HEK293 (cell line): ENCODE measurements at regions of chr9 and their contacts with region 1.

Region 1: DNA sequence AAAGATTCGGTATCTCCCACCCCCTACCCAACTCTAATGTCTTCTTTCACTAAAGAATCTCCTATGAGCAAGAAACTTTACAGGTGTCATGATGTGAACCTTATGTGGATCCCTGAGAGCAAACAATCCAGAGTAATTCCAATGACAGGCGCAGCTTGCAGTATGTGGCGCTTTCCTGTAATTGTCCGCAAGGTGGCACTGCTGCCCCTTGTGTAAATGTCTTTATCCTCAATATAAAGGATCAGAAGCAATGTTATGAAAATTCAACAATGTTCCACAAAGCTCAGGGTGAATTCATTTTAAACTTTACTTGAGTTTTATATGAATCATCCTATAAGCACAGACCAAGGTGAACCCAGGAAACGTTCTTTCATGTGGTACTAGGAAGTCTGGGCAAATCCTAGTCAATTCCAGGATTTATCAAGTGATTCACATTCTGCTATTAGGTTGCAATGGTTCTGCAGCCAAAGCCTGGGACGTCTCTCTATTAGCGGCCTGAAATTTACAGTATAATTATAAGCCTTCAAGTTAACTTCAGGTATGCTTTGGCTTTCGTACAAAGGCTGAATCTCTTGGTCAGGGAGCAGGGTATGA is 113.7 kb downstream of the TRPM6 start:
- H3K4me3 ChIP-seq: no peak overlapping the region
- H3K27ac ChIP-seq: no peak overlapping the region
- H3K4me1 ChIP-seq: no peaks in the 10 kb centered on the region
- CTCF ChIP-seq: no peak

Region 2: GRCh38 chr9:74795803-74796202 is 21.8 kb after region 1 on chr9:
- CTCF ChIA-PET with region 1: interaction called, 10 read pairs
- POLR2A ChIA-PET with region 1: no interaction called
- H3K4me3 ChIP-seq: no peak overlapping the region
- H3K27ac ChIP-seq: no peak overlapping the region
- H3K4me1 ChIP-seq: no peaks in the 10 kb centered on the region
- CTCF ChIP-seq: no peak

Region 3: GRCh38 chr9:74952281-74953151 is 178.5 kb after region 1 on chr9 and contains the start of gene C9orf40:
- CTCF ChIA-PET with region 1: interaction called, 29 read pairs
- POLR2A ChIA-PET with region 1: interaction called, 3 read pairs
- H3K4me3 ChIP-seq: peak within 1 kb of the TSS; percentile 94
- H3K27ac ChIP-seq: peak within 1 kb of the TSS; percentile 98
- H3K4me1 ChIP-seq: 0 out of 2 replicates have a peak, but pooled peaks cover 3% of the 10 kb centered on the region
- CTCF ChIP-seq: peak; percentile 86

Region 4: GRCh38 chr9:75001719-75002422 is 227.9 kb after region 1 on chr9:
- CTCF ChIA-PET with region 1: interaction called, 207 read pairs
- POLR2A ChIA-PET with region 1: no interaction called
- H3K4me3 ChIP-seq: no peak overlapping the region
- H3K27ac ChIP-seq: no peak overlapping the region
- H3K4me1 ChIP-seq: no peaks in the 10 kb centered on the region
- CTCF ChIP-seq: no peak

Region 5: DNA sequence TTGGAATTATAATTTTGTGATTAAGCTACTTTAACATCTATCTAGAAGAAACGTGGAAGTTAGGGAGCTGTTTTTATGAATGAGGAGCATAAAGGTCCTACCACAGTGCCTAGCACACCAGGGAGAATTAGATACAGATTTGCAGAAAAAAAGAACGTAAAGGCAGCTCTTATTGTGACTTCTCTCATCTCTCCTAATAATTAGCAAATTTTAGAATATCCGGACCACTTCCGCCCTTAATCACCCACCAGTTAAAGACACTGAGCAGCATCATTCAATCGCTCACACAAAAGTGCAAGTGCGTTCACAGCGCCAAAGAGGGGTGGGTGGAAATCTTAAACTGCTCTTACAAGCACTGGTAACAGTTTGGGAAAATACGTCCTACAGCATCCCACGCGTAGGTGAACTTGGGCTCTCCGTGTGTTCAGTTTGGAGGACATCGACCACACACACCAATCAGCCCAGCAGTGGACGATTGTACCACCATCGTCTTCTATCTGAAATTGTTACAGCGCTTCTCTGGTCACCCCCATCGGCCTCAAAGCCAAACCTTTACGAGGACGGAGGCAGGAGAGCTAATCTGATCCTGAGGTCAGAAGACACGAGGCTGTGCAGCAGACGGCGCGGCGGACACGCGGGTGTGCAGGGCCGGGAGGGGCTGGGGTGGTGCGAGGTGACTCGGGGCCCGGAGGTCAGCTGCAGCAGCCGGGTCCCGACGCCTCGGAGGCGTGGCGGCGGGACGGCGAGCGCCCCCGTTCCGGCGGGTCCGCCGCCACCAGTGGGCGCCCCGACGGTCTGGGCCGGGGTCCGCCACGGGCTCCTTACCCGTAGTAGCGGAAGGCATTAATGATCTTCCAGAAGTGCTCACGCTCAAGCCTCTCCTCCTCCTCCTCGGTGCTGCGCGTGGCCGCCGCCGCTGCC is 253.5 kb after region 1 on chr9:
- CTCF ChIA-PET with region 1: interaction called, 15 read pairs
- POLR2A ChIA-PET with region 1: interaction called, 3 read pairs
- H3K4me3 ChIP-seq: peak overlapping the region; percentile 79
- H3K27ac ChIP-seq: peak overlapping the region; percentile 93
- H3K4me1 ChIP-seq: 0 out of 2 replicates have a peak, but pooled peaks cover 3% of the 10 kb centered on the region
- CTCF ChIP-seq: no peak

Region 6: GRCh38 chr9:75071530-75072124 is 297.6 kb after region 1 on chr9:
- CTCF ChIA-PET with region 1: interaction called, 110 read pairs
- POLR2A ChIA-PET with region 1: no interaction called
- H3K4me3 ChIP-seq: no peak overlapping the region
- H3K27ac ChIP-seq: no peak overlapping the region
- H3K4me1 ChIP-seq: no peaks in the 10 kb centered on the region
- CTCF ChIP-seq: no peak

Region 7: DNA sequence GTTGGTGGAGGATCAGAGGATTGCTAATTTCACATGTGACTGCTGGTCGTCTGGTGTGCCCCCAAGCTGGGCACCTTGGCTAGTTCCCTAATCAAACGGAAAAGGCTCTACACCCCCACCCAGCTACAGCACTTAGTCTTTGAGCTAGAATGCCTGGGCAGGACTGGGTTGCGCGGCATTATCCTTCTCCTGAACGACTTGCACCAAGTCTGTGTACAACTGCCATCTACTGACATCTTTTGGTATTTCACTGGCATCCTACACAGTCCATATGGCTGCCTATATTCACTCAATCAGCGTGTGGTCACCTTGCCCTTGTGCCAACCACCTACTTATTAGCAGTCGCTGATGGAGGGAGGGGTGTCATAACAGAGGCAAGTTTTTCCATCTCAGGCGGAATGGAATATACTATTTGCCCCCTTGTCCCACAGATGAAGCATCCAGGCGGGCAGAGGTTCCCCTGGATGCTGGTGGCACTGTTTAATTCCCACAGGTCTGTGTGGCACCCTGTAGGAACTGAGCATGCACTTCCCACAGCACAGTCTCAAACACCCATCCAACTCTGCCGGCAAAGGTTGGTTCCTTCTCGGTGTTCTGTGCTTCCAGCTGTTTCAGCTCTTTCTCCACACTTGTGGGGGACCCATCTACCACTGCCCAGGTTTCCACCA is 464.5 kb after region 1 on chr9:
- CTCF ChIA-PET with region 1: interaction called, 15 read pairs
- POLR2A ChIA-PET with region 1: no interaction called
- H3K4me3 ChIP-seq: no peak overlapping the region
- H3K27ac ChIP-seq: no peak overlapping the region
- H3K4me1 ChIP-seq: no peaks in the 10 kb centered on the region
- CTCF ChIP-seq: no peak